ENCODE measurements at regions of chr2 and their contacts with region 1.

Region 1: DNA sequence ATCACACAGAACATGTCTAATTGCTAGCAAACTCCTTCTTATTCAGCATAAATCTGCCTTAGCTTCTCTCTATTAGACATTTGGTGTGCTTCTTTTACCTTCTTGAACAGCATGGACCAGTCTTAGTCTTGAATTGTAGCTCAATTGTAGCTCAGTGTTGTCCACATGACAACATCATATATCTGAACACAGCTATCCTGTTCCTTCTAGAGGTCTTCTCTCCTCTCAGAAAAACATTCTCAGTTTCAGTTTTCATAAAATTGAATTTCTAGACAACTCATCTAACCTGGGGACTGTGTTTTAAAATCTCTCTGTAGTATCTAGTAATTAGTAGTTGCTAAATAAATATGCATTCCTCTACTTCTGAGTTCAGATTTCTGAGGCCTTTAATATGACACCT is 47.6 kb downstream of the CPO start:
- DNase-seq: no peak
- ATAC-seq: no peak
- H3K4me3 ChIP-seq: no peak overlapping the region
- H3K27ac ChIP-seq: no peak overlapping the region
- H3K4me1 ChIP-seq: peaks cover 0 to 4% of the 10 kb centered on the region in 2 donors
- H3K27me3 ChIP-seq: no peaks in the 10 kb centered on the region
- CTCF ChIP-seq: no peak
- POLR2A ChIP-seq: no peak

Region 2: GRCh38 chr2:206728277-206729199 is 258.4 kb before region 1 on chr2:
- in situ Hi-C with region 1: no loop called
- intact Hi-C with region 1: no loop called
- DNase-seq: no peak
- ATAC-seq: no peak
- H3K4me3 ChIP-seq: no peak overlapping the region
- H3K27ac ChIP-seq: no peak overlapping the region
- H3K4me1 ChIP-seq: no peaks in the 10 kb centered on the region
- H3K27me3 ChIP-seq: no peaks in the 10 kb centered on the region
- CTCF ChIP-seq: no peak
- POLR2A ChIP-seq: no peak

Region 3: DNA sequence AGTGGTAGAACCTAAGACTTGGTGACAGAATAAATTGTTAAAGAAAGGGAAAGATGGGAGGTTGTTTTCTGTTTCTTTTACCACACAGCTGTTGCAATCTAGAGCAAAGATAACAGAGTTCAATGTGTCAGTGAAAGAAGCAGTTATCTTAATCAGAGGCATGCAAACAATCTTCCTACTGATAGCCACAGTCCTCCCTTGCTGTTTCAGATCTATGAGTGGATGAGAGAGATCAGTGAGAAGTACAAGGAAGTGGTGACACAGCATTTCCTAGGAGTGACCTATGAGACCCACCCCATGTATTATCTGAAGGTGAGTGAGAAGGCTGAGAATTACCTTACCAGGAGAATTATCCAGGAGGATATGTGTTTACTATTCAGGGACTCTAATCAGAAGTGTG is 31.7 kb before region 1 on chr2:
- in situ Hi-C with region 1: no loop called
- intact Hi-C with region 1: loop called (anchors 1 kb)
- DNase-seq: no peak
- ATAC-seq: no peak
- H3K4me3 ChIP-seq: no peak overlapping the region
- H3K27ac ChIP-seq: no peak overlapping the region
- H3K4me1 ChIP-seq: no peaks in the 10 kb centered on the region
- H3K27me3 ChIP-seq: no peaks in the 10 kb centered on the region
- CTCF ChIP-seq: no peak
- POLR2A ChIP-seq: no peak

Region 4: DNA sequence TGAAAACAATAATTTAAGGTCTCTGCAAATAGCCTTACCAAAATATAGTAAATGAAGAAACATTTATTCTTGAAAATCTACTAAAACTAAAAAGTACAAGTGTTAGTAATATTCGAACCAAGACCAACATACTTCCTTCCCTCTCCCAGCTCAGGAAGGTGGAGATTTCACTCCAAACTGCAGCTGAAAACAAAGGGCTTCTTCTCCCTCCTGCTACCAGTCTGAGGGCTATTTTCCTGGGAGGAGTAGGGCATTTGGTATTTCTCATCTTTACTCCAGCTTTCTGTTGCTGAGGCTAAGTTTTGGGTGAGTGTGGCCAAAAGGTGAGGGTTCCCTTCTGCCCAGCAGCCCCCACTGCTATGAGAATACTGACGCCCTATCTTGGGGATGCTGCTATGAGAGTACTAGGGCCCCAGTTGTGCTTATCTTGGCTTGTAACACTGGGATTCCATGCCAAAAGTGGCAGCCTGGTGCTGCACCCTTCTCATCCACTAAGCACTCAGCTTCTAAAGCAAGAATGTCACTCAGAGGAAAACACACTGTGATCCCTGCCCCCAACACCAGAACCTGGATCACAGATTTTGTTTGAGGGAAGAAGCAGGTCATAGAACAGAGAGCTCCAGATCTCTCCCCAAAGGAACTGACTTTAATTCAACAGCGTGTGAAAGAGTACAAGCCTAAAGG is 309.5 kb after region 1 on chr2:
- in situ Hi-C with region 1: no loop called
- intact Hi-C with region 1: no loop called
- DNase-seq: no peak
- ATAC-seq: no peak
- H3K4me3 ChIP-seq: no peak overlapping the region
- H3K27ac ChIP-seq: no peak overlapping the region
- H3K4me1 ChIP-seq: no peaks in the 10 kb centered on the region
- H3K27me3 ChIP-seq: no peaks in the 10 kb centered on the region
- CTCF ChIP-seq: no peak
- POLR2A ChIP-seq: no peak